ENCODE measurements at regions of chr12 and their contacts with region 1.

Region 1: GRCh38 chr12:52082988-52083637 is 3.6 kb downstream of the SMIM41 start:
- DNase-seq: peak; percentile 68 to 82
- H3K4me3 ChIP-seq: no peak overlapping the region
- H3K4me3 Mint-ChIP-seq: no peak overlapping the region
- H3K27ac Mint-ChIP-seq: no peak overlapping the region
- H3K4me1 ChIP-seq: no peaks in the 10 kb centered on the region
- H3K4me1 Mint-ChIP-seq: peaks cover 7% of the 10 kb centered on the region
- H3K27me3 ChIP-seq: no peaks in the 10 kb centered on the region
- H3K27me3 Mint-ChIP-seq: no peaks in the 10 kb centered on the region
- CTCF ChIP-seq: peak; percentile 98

Region 2: GRCh38 chr12:51505360-51506105 is 577.6 kb before region 1 on chr12:
- CTCF ChIA-PET with region 1: no interaction called
- POLR2A ChIA-PET with region 1: no interaction called
- intact Hi-C with region 1: no loop called
- DNase-seq: no peak
- H3K4me3 ChIP-seq: no peak overlapping the region
- H3K4me3 Mint-ChIP-seq: no peak overlapping the region
- H3K27ac Mint-ChIP-seq: no peak overlapping the region
- H3K4me1 ChIP-seq: no peaks in the 10 kb centered on the region
- H3K4me1 Mint-ChIP-seq: no peaks in the 10 kb centered on the region
- H3K27me3 ChIP-seq: no peaks in the 10 kb centered on the region
- H3K27me3 Mint-ChIP-seq: no peaks in the 10 kb centered on the region
- CTCF ChIP-seq: no peak

Region 3: GRCh38 chr12:52069327-52070184 is 13.6 kb before region 1 on chr12 and contains the start of gene ATG101:
- CTCF ChIA-PET with region 1: interaction called, 5 read pairs
- POLR2A ChIA-PET with region 1: interaction called, 3 read pairs
- intact Hi-C with region 1: loop called (anchors 1 kb)
- DNase-seq: peak; percentile 96
- H3K4me3 ChIP-seq: peak within 1 kb of the TSS; percentile 80
- H3K4me3 Mint-ChIP-seq: peak within 1 kb of the TSS; percentile 85
- H3K27ac Mint-ChIP-seq: peak within 1 kb of the TSS; percentile 100
- H3K4me1 ChIP-seq: peaks cover 12% of the 10 kb centered on the region
- H3K4me1 Mint-ChIP-seq: peaks cover 30% of the 10 kb centered on the region
- H3K27me3 ChIP-seq: no peaks in the 10 kb centered on the region
- H3K27me3 Mint-ChIP-seq: no peaks in the 10 kb centered on the region
- CTCF ChIP-seq: peak; percentile 47 to 97
- total RNA-seq, gene ATG101: 67.2 and 78.0 TPM in 2 replicates

Region 4: DNA sequence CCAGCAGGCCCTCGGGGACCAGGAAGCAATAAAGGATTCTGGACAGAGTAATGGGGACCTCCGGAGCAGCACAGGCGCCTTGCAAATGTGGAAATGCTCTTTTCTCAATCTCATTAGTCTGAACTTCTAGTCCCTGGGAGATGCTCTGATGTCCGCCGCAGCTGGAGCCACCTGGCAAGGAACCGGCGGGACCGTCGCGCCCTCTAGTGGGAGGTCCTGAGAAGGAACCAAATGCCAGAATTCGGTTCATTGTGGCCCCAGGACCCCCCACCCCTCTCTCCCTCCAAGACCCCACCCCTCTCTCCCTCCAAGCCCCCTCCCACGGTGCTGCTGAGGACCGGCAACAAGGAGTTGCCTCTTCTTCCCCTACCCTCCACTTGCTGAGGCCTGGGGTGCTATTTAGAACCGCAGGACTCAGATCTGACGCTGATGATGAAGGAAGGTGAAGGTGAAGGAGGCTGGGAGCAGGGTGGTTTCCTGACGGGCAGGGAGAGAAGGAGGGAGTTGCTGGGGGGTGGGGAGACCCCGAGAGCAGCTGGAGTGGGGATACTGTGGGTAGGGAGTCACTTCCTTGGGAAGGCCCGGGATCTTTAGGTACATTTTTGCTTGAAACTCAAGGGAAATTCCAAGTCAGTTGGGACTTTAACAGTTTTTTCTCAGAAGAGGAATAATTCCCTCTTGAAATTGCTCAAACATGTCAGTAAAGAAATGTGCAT is 38.9 kb after region 1 on chr12:
- CTCF ChIA-PET with region 1: interaction called, 5 read pairs
- POLR2A ChIA-PET with region 1: no interaction called
- intact Hi-C with region 1: loop called (anchors 2 kb)
- DNase-seq: peak; percentile 74 to 83
- H3K4me3 ChIP-seq: no peak overlapping the region
- H3K4me3 Mint-ChIP-seq: no peak overlapping the region
- H3K27ac Mint-ChIP-seq: no peak overlapping the region
- H3K4me1 ChIP-seq: peaks cover 21% of the 10 kb centered on the region
- H3K4me1 Mint-ChIP-seq: peaks cover 20% of the 10 kb centered on the region
- H3K27me3 ChIP-seq: no peaks in the 10 kb centered on the region
- H3K27me3 Mint-ChIP-seq: no peaks in the 10 kb centered on the region
- CTCF ChIP-seq: peak; percentile 96